ENCODE measurements at regions of chr5 and their contacts with region 1.

Region 1: GRCh38 chr5:107743373-107744000 is 72.8 kb upstream of the EFNA5 start:
- DNase-seq: no peak

Region 2: GRCh38 chr5:107772418-107773310 is 29.2 kb after region 1 on chr5:
- intact Hi-C with region 1: loop called in 1 of 2 experiments (anchors 1 kb)
- DNase-seq: no peak